ENCODE measurements at regions of chr17 and their contacts with region 1.

Region 1: GRCh38 chr17:39270923-39271322 is 45.2 kb upstream of the STAC2 start:
- H3K4me3 Mint-ChIP-seq: no peak overlapping the region
- H3K27ac Mint-ChIP-seq: no peak overlapping the region
- H3K4me1 Mint-ChIP-seq: no peaks in the 10 kb centered on the region
- H3K27me3 Mint-ChIP-seq: no peaks in the 10 kb centered on the region

Region 2: DNA sequence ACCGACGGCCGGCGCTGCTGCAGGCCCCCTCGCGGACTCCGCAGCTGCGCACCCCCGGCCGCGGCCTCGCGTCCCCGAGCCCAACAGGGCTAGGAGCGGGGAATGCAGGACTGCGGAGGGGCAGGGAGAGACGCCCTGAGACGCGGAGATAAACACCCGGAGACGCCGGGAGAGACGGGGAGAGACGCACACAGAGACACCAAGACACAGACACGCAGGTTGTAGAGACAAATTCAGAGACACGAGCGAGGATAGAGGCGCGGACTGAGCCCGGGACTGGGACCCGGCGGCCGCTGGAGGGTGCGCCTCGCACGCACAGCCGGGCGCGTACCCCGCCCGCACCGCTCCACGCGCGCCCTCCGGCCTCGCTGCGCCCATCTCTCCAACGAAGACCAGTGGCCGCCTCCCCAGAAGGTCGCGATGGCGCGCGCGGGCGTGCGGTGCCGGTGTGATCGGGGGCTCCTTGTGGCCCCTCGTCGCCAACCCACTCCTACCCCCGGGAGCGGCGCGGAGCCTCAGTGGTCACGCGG is 46.1 kb before region 1 on chr17:
- intact Hi-C with region 1: no loop called
- H3K4me3 Mint-ChIP-seq: peak overlapping the region; percentile 65
- H3K27ac Mint-ChIP-seq: no peak overlapping the region
- H3K4me1 Mint-ChIP-seq: peaks cover 28% of the 10 kb centered on the region
- H3K27me3 Mint-ChIP-seq: peaks cover 82% of the 10 kb centered on the region

Region 3: DNA sequence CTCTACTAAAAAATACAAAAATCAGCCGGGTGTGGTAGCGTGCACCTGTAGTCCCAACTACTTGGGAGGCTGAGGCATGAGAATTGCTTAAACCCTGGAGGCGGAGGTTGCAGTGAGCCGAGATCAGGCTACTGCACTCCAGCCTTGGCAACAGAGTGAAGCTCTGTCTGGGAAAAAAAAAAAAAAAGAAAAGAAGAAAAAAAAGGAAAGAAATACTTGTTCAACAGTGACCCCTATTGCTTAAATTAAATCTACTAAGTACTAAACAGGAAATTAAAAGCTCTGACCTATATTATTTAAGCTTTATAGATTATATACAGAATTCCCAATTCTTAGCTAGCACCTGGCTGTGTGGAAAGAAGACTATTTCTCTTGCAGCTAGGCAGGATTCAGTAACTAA is 81.6 kb after region 1 on chr17:
- intact Hi-C with region 1: loop called (anchors 5 kb)
- H3K4me3 Mint-ChIP-seq: no peak overlapping the region
- H3K27ac Mint-ChIP-seq: no peak overlapping the region
- H3K4me1 Mint-ChIP-seq: peaks cover 11% of the 10 kb centered on the region
- H3K27me3 Mint-ChIP-seq: no peaks in the 10 kb centered on the region

Region 4: GRCh38 chr17:39401412-39402243 is 130.7 kb after region 1 on chr17 and contains the start of gene FBXL20:
- intact Hi-C with region 1: loop called (anchors 10 kb)
- H3K4me3 Mint-ChIP-seq: peak within 1 kb of the TSS; percentile 98
- H3K27ac Mint-ChIP-seq: peak within 1 kb of the TSS; percentile 95
- H3K4me1 Mint-ChIP-seq: peaks cover 13% of the 10 kb centered on the region
- H3K27me3 Mint-ChIP-seq: no peaks in the 10 kb centered on the region